Gastrocnemius medialis (tissue), 4 donors: ENCODE measurements at regions of chr1 and their contacts with region 1.

Region 1: DNA sequence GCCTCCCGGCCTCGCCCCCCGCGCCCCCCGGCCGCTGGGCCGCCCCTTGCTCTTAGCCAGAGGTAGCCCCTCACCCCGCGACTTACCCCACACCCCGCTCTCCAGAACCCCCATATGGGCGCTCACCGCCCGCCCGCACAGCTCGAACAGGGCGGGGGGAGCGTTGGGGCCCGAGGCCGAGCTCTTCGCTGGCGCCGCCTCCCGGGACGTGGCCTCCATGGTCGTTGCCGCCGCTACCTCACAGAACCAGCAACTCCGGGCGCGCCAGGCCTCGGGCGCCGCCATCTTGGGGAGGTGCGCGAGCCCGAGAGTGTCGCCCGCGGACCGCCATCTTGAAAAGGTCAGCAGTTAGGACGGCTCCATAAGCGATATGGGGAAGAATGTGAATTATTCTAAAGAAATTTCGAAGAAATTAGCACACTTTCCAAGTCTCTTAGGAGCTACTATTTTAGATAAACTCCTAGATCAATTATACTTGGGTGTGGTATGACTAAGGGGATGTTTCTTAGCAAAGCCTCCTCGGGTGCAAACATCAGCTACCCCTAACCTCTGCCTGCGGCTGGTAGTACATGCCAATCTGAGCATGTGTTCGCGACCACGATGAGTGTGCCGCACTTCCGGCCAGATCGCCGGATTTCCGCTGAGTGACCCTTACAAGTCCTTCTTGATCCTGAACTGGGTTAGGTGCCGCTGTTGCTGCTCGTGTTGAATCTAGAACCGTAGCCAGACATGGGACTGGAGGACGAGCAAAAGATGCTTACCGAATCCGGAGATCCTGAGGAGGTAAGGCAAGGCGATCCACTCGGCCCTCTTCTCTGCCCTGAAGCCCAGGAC is at the starts of genes LRRC41 and UQCRH:
- DNase-seq: peak; percentile 95 to 97
- ATAC-seq: peak; percentile 91 to 95
- H3K4me3 ChIP-seq: peak within 1 kb of the TSS; percentile 83 to 96 (median 90)
- H3K27ac ChIP-seq: peak within 1 kb of the TSS; percentile 97 to 99 (median 98)
- H3K4me1 ChIP-seq: peaks cover 54 to 71% of the 10 kb centered on the region in 2 donors
- H3K27me3 ChIP-seq: no peaks in the 10 kb centered on the region
- CTCF ChIP-seq: peak in 1 of 5 experiments; percentile 10
- POLR2A ChIP-seq: peak; percentile 67 to 75
- total RNA-seq, gene LRRC41: 76.3 to 99.2 (median 77.9) TPM
- total RNA-seq, gene UQCRH: 415 to 695 (median 493) TPM

Region 2: GRCh38 chr1:46285730-46286477 is 17.4 kb before region 1 on chr1:
- in situ Hi-C with region 1: no loop called
- intact Hi-C with region 1: loop called (anchors 2 kb)
- DNase-seq: peak; percentile 87 to 94
- ATAC-seq: peak; percentile 97
- H3K4me3 ChIP-seq: no peak overlapping the region
- H3K27ac ChIP-seq: peak overlapping the region; percentile 83 to 93 (median 86)
- H3K4me1 ChIP-seq: peaks cover 24 to 46% of the 10 kb centered on the region in 2 donors
- H3K27me3 ChIP-seq: no peaks in the 10 kb centered on the region
- CTCF ChIP-seq: peak in 4 of 5 experiments; percentile 14 to 34 (median 24)
- POLR2A ChIP-seq: no peak

Region 3: GRCh38 chr1:46370214-46370633 is 67.0 kb after region 1 on chr1:
- in situ Hi-C with region 1: no loop called
- intact Hi-C with region 1: no loop called
- DNase-seq: no peak
- ATAC-seq: no peak
- H3K4me3 ChIP-seq: no peak overlapping the region
- H3K27ac ChIP-seq: no peak overlapping the region
- H3K4me1 ChIP-seq: no peaks in the 10 kb centered on the region
- H3K27me3 ChIP-seq: no peaks in the 10 kb centered on the region
- CTCF ChIP-seq: no peak
- POLR2A ChIP-seq: no peak